ENCODE measurements at regions of chr12 and their contacts with region 1.

Region 1: DNA sequence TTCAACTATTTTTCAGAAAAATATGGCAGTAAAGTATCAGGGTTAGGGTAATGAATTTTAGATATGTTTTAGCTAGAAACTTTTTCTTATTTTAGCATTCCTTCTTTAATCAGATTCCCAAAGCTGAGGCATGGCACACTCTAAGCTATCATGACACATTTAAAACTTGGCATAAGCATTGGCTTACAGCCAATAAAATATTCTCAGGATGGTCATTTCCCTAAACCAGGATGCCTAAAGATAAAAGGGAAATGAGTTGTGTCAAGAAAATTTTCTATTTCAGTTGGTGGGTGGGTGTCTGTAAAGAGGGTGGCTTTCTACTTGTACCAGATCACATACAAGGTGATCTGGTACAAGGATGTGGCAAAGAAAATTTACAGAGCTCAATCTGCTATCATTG is 47.8 kb downstream of the PEBP1 start:
- DNase-seq: no peak
- ATAC-seq: no peak
- H3K4me3 Mint-ChIP-seq: no peak overlapping the region
- H3K27ac Mint-ChIP-seq: no peak overlapping the region
- H3K4me1 Mint-ChIP-seq: peaks cover 24% of the 10 kb centered on the region
- H3K27me3 Mint-ChIP-seq: no peaks in the 10 kb centered on the region
- CTCF ChIP-seq: no peak

Region 2: DNA sequence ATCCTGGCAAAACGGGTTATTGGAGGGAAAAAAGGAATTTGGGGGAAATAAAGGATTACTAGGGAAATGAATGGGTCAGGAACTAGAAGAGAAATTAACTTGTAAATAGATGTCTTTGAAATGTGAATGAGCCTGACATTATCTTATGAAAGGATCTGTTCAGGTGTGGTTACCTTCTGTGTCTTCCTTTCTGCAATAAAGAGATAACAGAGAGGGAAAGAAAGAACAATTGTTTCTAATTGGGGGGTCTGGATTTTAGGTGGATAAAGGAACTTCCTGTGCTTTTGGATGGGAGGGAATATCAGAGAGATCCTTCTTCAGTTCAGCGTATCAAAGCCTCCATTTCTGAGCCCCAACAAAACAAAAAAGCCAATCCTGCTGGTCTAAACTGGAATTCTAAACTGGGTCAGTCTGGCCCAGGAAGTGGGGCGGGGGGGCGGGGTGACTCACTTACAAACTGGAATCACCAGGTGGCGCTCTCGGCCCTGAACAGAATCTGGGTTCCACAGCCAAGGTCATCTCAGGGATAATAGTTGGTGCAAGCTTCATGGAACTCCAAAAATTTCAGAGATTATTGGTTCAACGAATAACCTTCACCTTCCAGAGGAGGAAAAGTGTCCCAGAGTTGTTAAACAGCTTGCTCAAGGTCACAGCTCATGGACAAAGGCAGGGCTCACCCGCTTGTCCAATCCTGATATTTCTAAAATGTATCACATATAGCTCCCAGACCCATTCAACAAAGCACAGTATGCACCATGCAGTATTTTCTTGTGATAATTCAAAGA is 62.9 kb before region 1 on chr12:
- CTCF ChIA-PET with region 1: no interaction called
- POLR2A ChIA-PET with region 1: no interaction called
- intact Hi-C with region 1: loop called (anchors 1 kb)
- DNase-seq: peak; percentile 37
- ATAC-seq: peak; percentile 61
- H3K4me3 Mint-ChIP-seq: no peak overlapping the region
- H3K27ac Mint-ChIP-seq: peak overlapping the region; percentile 46
- H3K4me1 Mint-ChIP-seq: peaks cover 2% of the 10 kb centered on the region
- H3K27me3 Mint-ChIP-seq: no peaks in the 10 kb centered on the region
- CTCF ChIP-seq: peak; percentile 77

Region 3: DNA sequence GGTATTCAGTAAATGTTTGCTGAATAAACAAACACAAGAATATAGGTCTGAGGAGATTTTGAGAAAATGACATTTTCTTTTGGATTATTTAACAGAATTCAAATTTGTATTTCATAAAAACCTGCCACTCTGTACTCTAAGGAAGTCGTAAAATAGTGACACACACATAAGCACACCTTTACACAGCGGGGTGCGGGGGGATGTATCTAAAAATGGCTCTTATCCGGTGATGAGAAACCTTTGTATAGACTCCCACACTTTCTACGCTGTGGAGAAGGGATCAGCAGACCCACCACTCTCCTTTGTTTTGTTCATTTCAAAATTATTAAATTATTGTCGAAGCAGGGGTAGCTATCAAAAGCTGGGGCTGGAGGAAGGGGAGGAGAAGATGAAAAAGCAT is 10.3 kb after region 1 on chr12:
- CTCF ChIA-PET with region 1: interaction called, 3 read pairs
- POLR2A ChIA-PET with region 1: no interaction called
- intact Hi-C with region 1: loop called (anchors 2 kb)
- DNase-seq: no peak
- ATAC-seq: no peak
- H3K4me3 Mint-ChIP-seq: no peak overlapping the region
- H3K27ac Mint-ChIP-seq: no peak overlapping the region
- H3K4me1 Mint-ChIP-seq: no peaks in the 10 kb centered on the region
- H3K27me3 Mint-ChIP-seq: no peaks in the 10 kb centered on the region
- CTCF ChIP-seq: no peak

Region 4: GRCh38 chr12:118237052-118237665 is 53.5 kb after region 1 on chr12:
- CTCF ChIA-PET with region 1: no interaction called
- POLR2A ChIA-PET with region 1: no interaction called
- intact Hi-C with region 1: loop called (anchors 2 kb)
- DNase-seq: no peak
- ATAC-seq: peak; percentile 90
- H3K4me3 Mint-ChIP-seq: peak overlapping the region; percentile 77
- H3K27ac Mint-ChIP-seq: peak overlapping the region; percentile 89
- H3K4me1 Mint-ChIP-seq: peaks cover 45% of the 10 kb centered on the region
- H3K27me3 Mint-ChIP-seq: no peaks in the 10 kb centered on the region
- CTCF ChIP-seq: no peak

Region 5: DNA sequence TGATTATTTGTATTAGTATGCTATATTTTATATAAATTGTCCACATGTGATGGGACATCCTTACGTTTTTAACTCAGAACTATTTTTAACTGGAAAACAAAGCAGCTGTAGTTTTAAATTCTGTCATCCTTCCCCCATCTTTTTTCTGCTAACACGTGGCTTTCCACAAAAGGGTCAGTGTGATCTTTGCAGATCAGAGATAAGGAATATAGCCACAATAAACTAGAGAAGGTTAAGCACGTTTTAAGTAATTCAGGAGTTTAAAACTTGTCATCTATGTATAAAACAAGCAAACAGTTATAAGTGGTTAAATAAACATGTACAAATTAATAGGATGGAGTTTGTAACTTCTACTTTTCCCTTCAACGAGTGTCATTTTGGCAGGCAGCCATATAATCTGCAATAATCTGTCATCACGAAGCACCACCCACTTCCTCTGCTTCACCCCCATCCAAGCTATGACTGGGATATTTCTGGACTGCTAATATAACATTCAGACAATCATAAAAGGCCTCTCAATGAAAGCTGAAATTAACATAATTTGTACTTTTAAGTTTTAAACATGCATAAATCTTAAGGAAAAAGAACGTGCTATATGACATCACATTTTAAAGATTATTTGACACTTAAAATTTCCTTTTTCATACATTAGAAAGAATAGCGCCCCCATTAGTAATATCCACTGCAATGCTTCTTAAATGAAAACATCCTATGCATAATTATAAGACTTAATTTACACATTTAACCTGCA is 173.7 kb after region 1 on chr12:
- CTCF ChIA-PET with region 1: interaction called, 5 read pairs
- POLR2A ChIA-PET with region 1: no interaction called
- intact Hi-C with region 1: loop called (anchors 5 kb)
- DNase-seq: no peak
- ATAC-seq: peak; percentile 64
- H3K4me3 Mint-ChIP-seq: peak overlapping the region; percentile 72
- H3K27ac Mint-ChIP-seq: peak overlapping the region; percentile 83
- H3K4me1 Mint-ChIP-seq: peaks cover 61% of the 10 kb centered on the region
- H3K27me3 Mint-ChIP-seq: no peaks in the 10 kb centered on the region
- CTCF ChIP-seq: no peak